ENCODE measurements at regions of chr17 and their contacts with region 1.

Region 1: GRCh38 chr17:58710936-58711775 is 18.8 kb downstream of the RAD51C start:
- DNase-seq: peak; percentile 73
- H3K4me3 ChIP-seq: no peak overlapping the region
- H3K27ac ChIP-seq: no peak overlapping the region
- H3K4me1 ChIP-seq: no peaks in the 10 kb centered on the region
- H3K27me3 ChIP-seq: no peaks in the 10 kb centered on the region
- CTCF ChIP-seq: peak; percentile 89

Region 2: GRCh38 chr17:58595326-58595725 is 115.8 kb before region 1 on chr17:
- CTCF ChIA-PET with region 1: no interaction called
- POLR2A ChIA-PET with region 1: no interaction called
- intact Hi-C with region 1: no loop called
- DNase-seq: no peak
- H3K4me3 ChIP-seq: no peak overlapping the region
- H3K27ac ChIP-seq: no peak overlapping the region
- H3K4me1 ChIP-seq: no peaks in the 10 kb centered on the region
- H3K27me3 ChIP-seq: no peaks in the 10 kb centered on the region
- CTCF ChIP-seq: no peak

Region 3: GRCh38 chr17:58692239-58693055 is 18.7 kb before region 1 on chr17 and contains the start of gene RAD51C:
- CTCF ChIA-PET with region 1: no interaction called
- POLR2A ChIA-PET with region 1: interaction called, 20 read pairs
- intact Hi-C with region 1: no loop called
- DNase-seq: peak; percentile 92
- H3K4me3 ChIP-seq: peak within 1 kb of the TSS; percentile 60
- H3K27ac ChIP-seq: peak within 1 kb of the TSS; percentile 87
- H3K4me1 ChIP-seq: peaks cover 6% of the 10 kb centered on the region
- H3K27me3 ChIP-seq: no peaks in the 10 kb centered on the region
- CTCF ChIP-seq: no peak
- total RNA-seq, gene RAD51C: 79.8 and 80.4 TPM in 2 replicates

Region 4: GRCh38 chr17:58917228-58917627 is 206.1 kb after region 1 on chr17:
- CTCF ChIA-PET with region 1: no interaction called
- POLR2A ChIA-PET with region 1: interaction called, 13 read pairs
- intact Hi-C with region 1: no loop called
- DNase-seq: no peak
- H3K4me3 ChIP-seq: no peak overlapping the region
- H3K27ac ChIP-seq: no peak overlapping the region
- H3K4me1 ChIP-seq: peaks cover 13% of the 10 kb centered on the region
- H3K27me3 ChIP-seq: no peaks in the 10 kb centered on the region
- CTCF ChIP-seq: no peak

Region 5: GRCh38 chr17:59004338-59005111 is 293.4 kb after region 1 on chr17:
- CTCF ChIA-PET with region 1: interaction called, 15 read pairs
- POLR2A ChIA-PET with region 1: interaction called, 3 read pairs
- intact Hi-C with region 1: loop called (anchors 1 kb)
- DNase-seq: peak; percentile 75
- H3K4me3 ChIP-seq: no peak overlapping the region
- H3K27ac ChIP-seq: peak overlapping the region; percentile 25
- H3K4me1 ChIP-seq: peaks cover 25% of the 10 kb centered on the region
- H3K27me3 ChIP-seq: no peaks in the 10 kb centered on the region
- CTCF ChIP-seq: peak; percentile 94